Gastrocnemius medialis (tissue), 4 donors: ENCODE measurements at regions of chr1 and their contacts with region 1.

Region 1: DNA sequence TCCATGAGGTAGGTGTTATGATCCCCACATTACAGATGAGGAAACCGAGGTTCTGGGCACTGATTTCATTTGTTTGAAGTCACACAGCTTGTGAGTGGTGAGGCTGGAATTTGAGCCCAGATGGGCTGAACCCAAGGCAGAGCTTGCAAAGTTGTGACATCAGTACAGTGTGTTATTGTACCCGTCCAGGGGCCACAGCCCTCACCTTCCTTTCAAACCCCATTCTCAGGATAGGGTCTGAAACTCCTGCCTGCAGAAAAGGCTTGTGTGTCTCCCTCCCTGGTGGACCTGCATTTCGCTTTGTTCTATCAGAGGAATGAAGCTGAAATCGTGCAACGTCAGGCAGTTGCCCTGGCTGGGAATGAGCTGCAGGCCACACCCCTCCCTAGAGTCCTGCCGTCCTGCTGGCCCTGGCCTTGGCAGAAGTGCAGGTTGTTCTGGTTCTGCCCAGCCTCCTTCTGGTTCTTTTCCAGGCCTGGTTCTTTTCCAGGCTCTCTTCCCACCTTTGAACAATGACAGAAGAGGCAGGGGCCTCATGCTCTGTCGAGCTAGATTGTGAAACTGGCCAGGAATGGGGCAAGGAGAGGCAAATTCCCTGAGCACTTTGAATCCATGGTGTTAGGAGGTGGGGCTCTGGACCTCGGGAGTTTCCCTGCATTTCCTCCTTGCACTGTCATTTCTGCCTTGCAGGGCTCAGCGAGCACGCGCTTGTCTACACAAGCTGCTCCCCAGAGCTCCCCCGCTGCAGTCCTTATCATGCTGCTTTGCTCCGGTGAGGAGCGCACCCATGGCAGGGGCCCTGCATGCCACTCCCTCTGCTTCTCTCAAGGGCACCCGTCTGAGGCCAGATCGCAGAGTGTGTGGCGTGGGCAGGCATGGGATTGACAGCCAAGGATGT is 8.2 kb upstream of the MYOM3 start:
- DNase-seq: peak in 1 of 2 donors; percentile 27
- ATAC-seq: peak; percentile 60 to 64
- H3K4me3 ChIP-seq: no peak overlapping the region
- H3K27ac ChIP-seq: peak overlapping the region in 3 of 4 donors; percentile 1 to 73 (median 13)
- H3K4me1 ChIP-seq: peaks cover 6 to 26% of the 10 kb centered on the region in 2 donors
- H3K27me3 ChIP-seq: no peaks in the 10 kb centered on the region
- CTCF ChIP-seq: no peak
- POLR2A ChIP-seq: no peak

Region 2: DNA sequence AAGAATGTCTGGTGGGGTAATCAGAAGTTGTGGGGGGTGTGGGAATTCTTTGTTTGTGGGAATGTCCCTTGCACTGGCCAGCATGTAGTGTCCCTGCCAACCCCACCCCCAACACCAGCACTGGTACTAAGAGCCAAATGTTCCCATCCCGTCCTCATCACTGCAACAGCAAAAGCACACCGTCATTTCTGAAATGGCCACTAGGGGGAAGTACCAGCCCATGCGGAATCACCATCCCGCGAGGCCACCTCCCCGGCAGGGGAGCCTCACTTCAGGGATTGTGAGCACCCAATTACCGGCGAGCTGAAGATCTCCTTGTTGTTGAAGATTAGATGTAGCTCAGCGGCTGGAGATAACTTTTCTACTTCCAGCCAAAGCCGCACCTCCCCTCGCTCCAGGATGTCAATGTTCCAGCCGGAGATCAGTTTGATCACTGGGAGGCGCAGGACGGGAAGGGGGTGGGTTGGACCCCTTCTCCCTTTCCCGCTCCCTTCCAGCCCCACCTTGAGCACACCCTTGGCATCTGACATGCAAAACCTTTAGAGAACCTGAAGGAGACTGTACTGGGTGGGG is 49.2 kb before region 1 on chr1:
- in situ Hi-C with region 1: loop called in 2 of 4 experiments (anchors 5 to 10 kb)
- intact Hi-C with region 1: no loop called
- DNase-seq: peak; percentile 74 to 83
- ATAC-seq: peak; percentile 76 to 82
- H3K4me3 ChIP-seq: no peak overlapping the region
- H3K27ac ChIP-seq: peak overlapping the region; percentile 76 to 89 (median 80)
- H3K4me1 ChIP-seq: peaks cover 28 to 43% of the 10 kb centered on the region in 2 donors
- H3K27me3 ChIP-seq: no peaks in the 10 kb centered on the region
- CTCF ChIP-seq: peak; percentile 82 to 95 (median 94)
- POLR2A ChIP-seq: no peak